ENCODE measurements at regions of chr10 and their contacts with region 1.

Region 1: DNA sequence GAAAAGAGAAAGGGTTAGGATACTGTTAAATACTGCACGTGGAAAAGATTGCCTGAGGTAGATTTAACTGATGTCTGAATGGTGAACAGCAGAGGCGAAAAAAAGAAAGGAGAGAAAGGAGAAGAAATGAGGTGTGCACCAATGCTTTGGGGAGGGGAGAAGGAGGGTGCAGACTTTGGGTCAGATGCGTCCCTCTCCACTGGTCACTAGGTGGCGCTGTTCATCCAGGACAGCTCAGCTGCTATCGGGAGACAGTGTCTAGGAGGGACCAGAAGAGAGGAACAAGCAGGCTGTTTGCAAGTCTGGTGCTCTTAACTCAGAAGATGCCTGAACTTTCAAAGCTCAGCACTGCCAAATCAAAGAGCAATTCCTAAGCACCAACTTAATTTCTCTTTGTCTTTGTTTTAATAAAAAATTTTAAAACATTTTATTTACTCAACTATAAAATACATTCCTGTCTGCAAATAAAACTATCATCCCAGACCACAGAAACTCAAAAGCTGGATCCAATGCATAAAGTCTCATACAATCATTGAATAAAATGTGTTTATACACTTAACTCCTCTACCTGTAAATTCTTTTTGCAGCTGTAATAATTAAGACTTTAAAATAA is 83.9 kb upstream of the PDLIM1 start:
- DNase-seq: peak; percentile 79
- ATAC-seq: peak; percentile 99
- H3K4me3 ChIP-seq: no peak overlapping the region
- H3K27ac ChIP-seq: no peak overlapping the region
- H3K4me1 ChIP-seq: no peaks in the 10 kb centered on the region
- H3K27me3 ChIP-seq: no peaks in the 10 kb centered on the region
- CTCF ChIP-seq: peak; percentile 96
- EP300 ChIP-seq: no peak
- POLR2A ChIP-seq: no peak
- RAD21 ChIP-seq: peak; percentile 82

Region 2: GRCh38 chr10:95907456-95908253 is 533.0 kb after region 1 on chr10 and contains the start of gene CC2D2B:
- CTCF ChIA-PET with region 1: no interaction called
- POLR2A ChIA-PET with region 1: no interaction called
- in situ Hi-C with region 1: no loop called
- intact Hi-C with region 1: loop called (anchors 5 kb)
- DNase-seq: peak; percentile 66
- ATAC-seq: peak; percentile 97
- H3K4me3 ChIP-seq: peak within 1 kb of the TSS; percentile 48 to 77 (median 54)
- H3K27ac ChIP-seq: peak within 1 kb of the TSS; percentile 67
- H3K4me1 ChIP-seq: peaks cover 34% of the 10 kb centered on the region
- H3K27me3 ChIP-seq: no peaks in the 10 kb centered on the region
- CTCF ChIP-seq: peak; percentile 61
- EP300 ChIP-seq: no peak
- POLR2A ChIP-seq: peak in 1 of 2 experiments; percentile 81; a peak in 2 of 4 replicates
- RAD21 ChIP-seq: no peak
- total RNA-seq, gene CC2D2B: 0.20 and 0.22 TPM in 2 replicates

Measured in HepG2 (cell line).